Spleen (tissue), 13 donors: ENCODE measurements at regions of chr20 and their contacts with region 1.

Region 1: DNA sequence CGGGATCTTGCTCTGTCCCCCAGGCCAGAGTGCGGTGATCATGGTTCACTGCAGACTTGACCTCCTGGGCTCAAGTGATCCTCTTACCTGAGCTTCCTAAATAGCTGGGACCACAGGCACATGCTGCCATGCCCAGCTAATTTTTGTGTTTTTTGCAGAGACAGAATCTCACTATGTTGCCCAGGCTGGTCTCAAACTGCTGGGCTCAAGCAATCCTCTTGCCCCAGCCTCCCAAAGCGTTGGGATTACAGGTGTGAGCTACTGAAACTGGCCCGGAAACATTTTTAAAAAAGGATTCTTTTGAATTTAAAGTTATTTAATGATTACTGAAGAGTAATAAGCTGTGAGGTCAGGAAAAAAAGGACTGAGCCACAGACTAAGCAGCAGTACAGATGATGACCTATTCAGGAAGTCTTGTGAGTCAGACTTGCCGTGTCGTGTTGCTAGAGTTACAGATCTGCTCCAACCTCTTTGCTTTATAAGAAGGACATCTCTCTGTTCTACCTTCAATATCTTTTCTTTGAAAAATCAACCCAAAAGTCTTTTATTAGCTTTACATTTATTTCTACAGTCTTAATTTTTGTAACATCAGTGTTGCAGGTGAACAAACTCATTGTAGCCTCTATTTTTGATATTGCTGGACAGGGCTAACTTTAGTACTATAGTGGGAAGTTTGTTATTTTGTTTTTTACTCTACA is 108.7 kb downstream of the NCOA3 start:
- DNase-seq: no peak
- H3K4me3 ChIP-seq: no peak overlapping the region
- H3K27ac ChIP-seq: peak overlapping the region in 6 of 8 donors; percentile 20 to 59 (median 52)
- H3K4me1 ChIP-seq: peaks cover 21 to 100% (median 65%) of the 10 kb centered on the region in 6 donors
- H3K27me3 ChIP-seq: no peaks in the 10 kb centered on the region
- CTCF ChIP-seq: no peak
- POLR2A ChIP-seq: no peak

Region 2: GRCh38 chr20:46954490-46955038 is 655.8 kb before region 1 on chr20:
- intact Hi-C with region 1: no loop called
- DNase-seq: peak; percentile 5
- H3K4me3 ChIP-seq: no peak overlapping the region
- H3K27ac ChIP-seq: no peak overlapping the region
- H3K4me1 ChIP-seq: no peaks in the 10 kb centered on the region
- H3K27me3 ChIP-seq: peaks cover 0 to 21% (median 0%) of the 10 kb centered on the region in 7 donors
- CTCF ChIP-seq: no peak
- POLR2A ChIP-seq: no peak

Region 3: DNA sequence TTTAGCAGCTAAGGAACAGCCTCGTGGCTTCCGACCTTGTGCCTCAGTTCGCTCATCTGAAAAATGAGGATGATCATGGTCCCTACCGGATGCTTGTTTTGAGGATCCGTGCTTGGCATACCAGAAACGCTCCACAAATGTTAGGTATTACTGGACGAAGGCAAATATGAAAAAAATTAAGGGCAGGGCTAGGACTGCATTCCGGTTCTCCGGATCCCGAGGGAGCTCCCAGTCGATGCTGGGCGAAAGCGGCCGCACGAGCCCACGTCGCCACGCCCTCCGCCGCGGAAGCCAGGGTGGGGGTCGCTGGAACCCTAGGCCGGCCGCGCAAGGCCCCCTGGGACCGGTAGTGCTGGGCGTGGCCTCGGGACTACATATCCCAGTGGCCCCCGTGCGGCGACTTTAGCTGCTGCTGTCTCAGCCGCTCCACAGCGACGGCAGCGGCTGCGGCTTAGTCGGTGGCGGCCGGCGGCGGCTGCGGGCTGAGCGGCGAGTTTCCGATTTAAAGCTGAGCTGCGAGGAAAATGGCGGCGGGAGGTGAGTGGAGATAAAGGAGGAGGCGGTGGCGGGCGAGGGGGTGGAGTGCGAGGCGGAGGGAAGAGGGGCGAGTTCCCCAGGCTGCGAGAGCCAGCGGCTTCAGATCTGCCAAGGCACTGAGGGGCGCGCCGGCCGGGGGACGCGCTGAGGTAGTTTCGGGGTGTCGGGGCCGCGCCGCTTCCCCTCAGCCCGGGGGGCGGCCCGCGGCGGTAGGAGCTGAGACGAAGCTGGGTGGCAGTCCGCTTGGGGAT is 108.7 kb before region 1 on chr20 and contains the start of gene NCOA3:
- intact Hi-C with region 1: loop called (anchors 10 kb)
- DNase-seq: peak; percentile 98
- H3K4me3 ChIP-seq: peak within 1 kb of the TSS; percentile 51 to 84 (median 78)
- H3K27ac ChIP-seq: peak within 1 kb of the TSS; percentile 78 to 98 (median 95)
- H3K4me1 ChIP-seq: peaks cover 29 to 52% (median 48%) of the 10 kb centered on the region in 6 donors
- H3K27me3 ChIP-seq: no peaks in the 10 kb centered on the region
- CTCF ChIP-seq: peak; percentile 40 to 91 (median 78)
- POLR2A ChIP-seq: peak; percentile 80 to 98 (median 95)
- total RNA-seq, gene NCOA3: 78.6 to 93.7 (median 84.1) TPM

Region 4: GRCh38 chr20:49303065-49303552 is 1692.7 kb after region 1 on chr20:
- intact Hi-C with region 1: no loop called
- DNase-seq: no peak
- H3K4me3 ChIP-seq: no peak overlapping the region
- H3K27ac ChIP-seq: no peak overlapping the region
- H3K4me1 ChIP-seq: peaks cover 0 to 16% (median 0%) of the 10 kb centered on the region in 6 donors
- H3K27me3 ChIP-seq: no peaks in the 10 kb centered on the region
- CTCF ChIP-seq: no peak
- POLR2A ChIP-seq: no peak